ENCODE measurements at regions of chr14 and their contacts with region 1.

Region 1: GRCh38 chr14:76918751-76919543 is 92.7 kb downstream of the LRRC74A start:
- DNase-seq: peak; percentile 92
- H3K4me3 ChIP-seq: peak overlapping the region; percentile 39
- CTCF ChIP-seq: peak; percentile 27

Region 2: DNA sequence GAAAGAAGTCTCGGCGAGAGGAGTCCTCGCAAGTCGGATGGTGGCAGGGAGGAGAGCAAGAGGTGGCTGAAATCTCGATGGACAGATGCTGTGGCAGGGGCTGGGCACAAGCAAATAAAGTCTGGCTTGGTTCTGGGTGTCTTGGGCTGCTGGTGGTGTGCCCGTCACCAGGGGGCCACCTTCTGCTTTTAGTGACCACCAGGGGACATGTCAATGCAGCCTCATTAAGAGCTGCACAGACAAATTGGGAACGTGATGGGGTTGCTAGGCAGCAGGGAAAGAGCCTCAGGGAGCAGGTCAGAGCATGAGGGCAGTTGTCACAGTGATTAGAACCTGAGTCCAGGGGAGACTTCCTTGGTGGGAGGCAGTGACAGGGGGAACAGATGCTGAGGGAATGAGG is 48.8 kb before region 1 on chr14:
- CTCF ChIA-PET with region 1: interaction called, 217 read pairs
- POLR2A ChIA-PET with region 1: no interaction called
- DNase-seq: no peak
- H3K4me3 ChIP-seq: no peak overlapping the region
- CTCF ChIP-seq: peak; percentile 33

Region 3: DNA sequence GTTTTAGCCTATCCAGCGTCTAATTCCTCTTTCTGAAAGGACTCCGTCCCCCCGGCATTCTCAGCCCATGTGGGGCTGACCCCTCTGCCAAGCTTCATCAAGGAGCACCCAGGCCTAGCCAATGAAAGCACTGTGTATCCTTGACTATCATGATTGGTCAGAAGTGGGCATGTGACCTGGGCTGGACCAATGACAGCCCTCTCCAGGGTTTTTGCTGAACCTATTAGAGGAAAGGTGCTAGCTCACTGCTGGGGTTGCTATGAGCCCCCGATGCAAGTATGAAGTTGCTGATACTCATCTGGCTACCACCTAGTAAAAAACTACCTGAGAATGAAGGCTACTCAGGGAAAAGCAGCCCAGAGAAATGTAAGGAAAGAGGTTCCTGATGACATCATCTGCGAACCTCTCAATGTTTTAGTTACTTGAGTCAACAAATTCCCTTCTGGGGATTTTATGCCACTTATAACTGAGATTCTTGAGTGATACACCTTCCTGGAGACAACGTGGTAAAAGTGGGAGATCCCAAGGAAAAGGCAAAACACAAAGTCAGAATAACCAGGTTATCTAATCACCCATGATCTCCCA is 24.5 kb before region 1 on chr14:
- CTCF ChIA-PET with region 1: interaction called, 123 read pairs
- POLR2A ChIA-PET with region 1: no interaction called
- DNase-seq: no peak
- H3K4me3 ChIP-seq: no peak overlapping the region
- CTCF ChIP-seq: no peak

Region 4: GRCh38 chr14:76937181-76938091 is 18.5 kb after region 1 on chr14:
- CTCF ChIA-PET with region 1: interaction called, 31 read pairs
- POLR2A ChIA-PET with region 1: interaction called, 3 read pairs
- DNase-seq: no peak
- H3K4me3 ChIP-seq: no peak overlapping the region
- CTCF ChIP-seq: no peak

Region 5: GRCh38 chr14:76962303-76962660 is 43.3 kb after region 1 on chr14:
- CTCF ChIA-PET with region 1: interaction called, 17 read pairs
- POLR2A ChIA-PET with region 1: interaction called, 23 read pairs
- DNase-seq: no peak
- H3K4me3 ChIP-seq: peak overlapping the region; percentile 48
- CTCF ChIP-seq: no peak

Region 6: DNA sequence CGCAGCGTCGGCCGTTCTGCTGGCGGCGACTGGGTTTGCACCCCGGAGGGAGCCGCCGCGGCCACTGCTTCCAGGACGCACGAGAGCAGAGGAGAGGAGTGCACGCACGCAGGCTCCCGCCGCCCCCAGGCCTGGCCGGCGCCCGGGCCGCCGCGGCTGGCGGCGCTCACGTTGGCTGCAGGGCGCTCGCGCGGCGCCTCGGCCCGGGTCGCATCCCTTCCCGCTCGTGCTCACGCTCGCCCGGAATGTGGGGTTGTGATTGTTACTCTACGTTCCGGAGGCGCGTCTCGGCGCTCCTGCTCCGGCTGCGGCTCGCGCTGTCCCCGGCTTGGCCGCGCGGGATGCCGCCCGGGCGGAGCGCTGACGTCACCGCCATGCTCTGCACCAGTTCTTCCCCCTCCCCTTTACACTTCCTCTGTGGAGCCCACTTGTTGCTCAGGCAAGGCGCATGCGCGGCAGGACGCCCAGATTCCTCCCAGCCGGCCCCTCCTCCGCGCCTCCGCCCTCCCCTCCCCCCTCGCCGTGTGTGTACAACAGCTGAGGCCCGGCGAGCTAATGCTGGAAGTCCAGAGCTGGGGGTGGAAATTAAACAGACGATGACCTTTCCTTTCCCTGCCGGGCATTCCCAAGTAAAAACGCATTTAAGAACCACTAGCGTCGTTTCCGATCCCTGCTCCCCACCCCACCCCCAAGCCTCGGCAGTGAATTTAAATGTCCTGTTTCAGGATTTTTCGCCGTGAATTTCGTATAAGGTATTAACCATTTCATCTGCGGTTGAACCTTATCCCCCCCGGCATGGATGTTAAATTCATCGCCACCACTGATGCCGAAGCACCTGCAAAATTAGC is 109.7 kb after region 1 on chr14 and contains the start of gene IRF2BPL:
- CTCF ChIA-PET with region 1: interaction called, 661 read pairs
- POLR2A ChIA-PET with region 1: interaction called, 30 read pairs
- DNase-seq: peak; percentile 92
- H3K4me3 ChIP-seq: peak within 1 kb of the TSS; percentile 92
- CTCF ChIP-seq: no peak

Measured in AG04449 (cell line).